Activated B cell treated with CpG ODN at 0.5 μM for 24 hours (primary cell): ENCODE measurements at regions of chr12 and their contacts with region 1.

Region 1: GRCh38 chr12:76810671-76811419 is 46.9 kb downstream of the ZDHHC17 start:
- DNase-seq: no peak
- ATAC-seq: no peak
- H3K4me3 Mint-ChIP-seq: no peak overlapping the region
- H3K27ac Mint-ChIP-seq: no peak overlapping the region
- H3K4me1 Mint-ChIP-seq: peaks cover 2% of the 10 kb centered on the region
- H3K27me3 Mint-ChIP-seq: no peaks in the 10 kb centered on the region
- CTCF ChIP-seq: no peak

Region 2: GRCh38 chr12:76820888-76821482 is 10.1 kb after region 1 on chr12:
- CTCF ChIA-PET with region 1: interaction called, 3 read pairs
- POLR2A ChIA-PET with region 1: no interaction called
- intact Hi-C with region 1: loop called (anchors 2 kb)
- DNase-seq: no peak
- ATAC-seq: no peak
- H3K4me3 Mint-ChIP-seq: no peak overlapping the region
- H3K27ac Mint-ChIP-seq: no peak overlapping the region
- H3K4me1 Mint-ChIP-seq: no peaks in the 10 kb centered on the region
- H3K27me3 Mint-ChIP-seq: no peaks in the 10 kb centered on the region
- CTCF ChIP-seq: no peak

Region 3: DNA sequence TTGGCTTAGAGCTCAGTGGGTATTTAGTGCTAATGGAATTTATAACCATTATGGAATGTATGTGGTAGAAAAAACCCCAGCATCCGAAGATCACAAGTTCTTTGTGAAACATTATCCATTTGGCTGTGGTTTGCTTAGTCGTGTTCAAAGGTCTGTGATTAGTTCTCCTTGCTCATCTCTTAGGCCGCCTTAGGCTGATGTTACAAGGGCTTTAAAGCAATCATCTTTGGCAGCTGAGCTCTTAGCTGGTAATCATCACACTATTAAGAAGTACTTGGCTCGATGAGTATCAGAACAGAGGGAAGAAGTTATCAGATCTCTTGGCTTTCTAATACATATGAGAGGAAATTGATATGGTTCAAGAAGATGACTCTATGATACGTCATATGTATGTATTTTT is 378.6 kb after region 1 on chr12:
- CTCF ChIA-PET with region 1: no interaction called
- POLR2A ChIA-PET with region 1: no interaction called
- intact Hi-C with region 1: no loop called
- DNase-seq: no peak
- ATAC-seq: no peak
- H3K4me3 Mint-ChIP-seq: no peak overlapping the region
- H3K27ac Mint-ChIP-seq: no peak overlapping the region
- H3K4me1 Mint-ChIP-seq: no peaks in the 10 kb centered on the region
- H3K27me3 Mint-ChIP-seq: peaks cover 2% of the 10 kb centered on the region
- CTCF ChIP-seq: no peak